Right ventricle myocardium inferior (tissue), 1 donor: ENCODE measurements at regions of chr1 and their contacts with region 1.

Region 1: DNA sequence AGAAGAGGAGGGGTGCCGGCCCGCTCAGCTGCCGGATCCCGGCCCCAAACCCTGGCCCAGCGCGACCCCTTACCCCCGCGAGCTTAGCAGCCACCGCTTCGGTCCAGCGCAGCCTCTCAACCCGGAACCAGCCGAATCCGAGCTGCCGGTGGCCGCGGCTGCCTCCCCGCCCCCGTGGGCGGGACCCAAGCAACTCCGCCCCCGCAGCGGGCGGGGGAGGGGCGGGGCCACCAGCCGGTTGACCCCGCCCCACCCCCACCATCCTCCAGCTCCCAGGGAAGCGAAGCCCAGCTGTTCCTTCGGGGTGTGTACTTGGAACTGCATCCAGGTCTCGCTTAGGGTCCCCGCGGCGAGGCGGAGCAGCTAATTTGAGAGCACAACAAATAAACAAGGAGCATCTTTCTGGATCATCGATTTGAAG is at the start of gene TRIM62:
- DNase-seq: peak; percentile 94
- ATAC-seq: peak; percentile 91
- total RNA-seq, gene TRIM62: 2.3 TPM

Region 2: DNA sequence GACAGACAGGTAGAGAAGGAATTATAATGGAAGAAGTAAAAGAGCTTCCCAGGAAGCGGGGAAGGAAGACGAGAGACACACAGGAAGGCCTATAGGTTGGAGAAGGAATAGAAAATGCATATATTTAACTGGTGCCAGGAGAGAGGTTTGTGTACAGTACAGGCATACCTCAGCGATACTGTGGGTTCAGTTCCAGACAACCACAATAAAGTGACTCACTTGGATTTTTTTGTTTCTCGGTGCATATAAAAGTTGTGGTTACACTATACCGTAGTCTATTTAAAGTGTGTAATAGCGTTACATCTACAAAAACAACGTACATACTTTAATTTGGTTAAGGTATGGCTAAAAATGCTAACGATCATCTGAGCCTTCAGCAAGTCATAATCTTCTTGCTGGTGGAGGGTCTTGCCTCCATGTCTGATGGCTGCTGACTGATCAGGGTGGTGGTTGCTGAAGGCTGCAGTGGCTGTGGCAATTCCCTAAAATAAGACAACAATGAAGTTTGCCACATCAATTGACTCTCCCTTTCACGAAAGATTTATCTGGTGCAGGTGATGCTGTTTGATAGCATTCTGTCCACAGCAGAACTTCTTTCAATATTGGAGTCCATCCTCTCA is 380.7 kb before region 1 on chr1:
- intact Hi-C with region 1: no loop called
- DNase-seq: no peak
- ATAC-seq: no peak

Region 3: DNA sequence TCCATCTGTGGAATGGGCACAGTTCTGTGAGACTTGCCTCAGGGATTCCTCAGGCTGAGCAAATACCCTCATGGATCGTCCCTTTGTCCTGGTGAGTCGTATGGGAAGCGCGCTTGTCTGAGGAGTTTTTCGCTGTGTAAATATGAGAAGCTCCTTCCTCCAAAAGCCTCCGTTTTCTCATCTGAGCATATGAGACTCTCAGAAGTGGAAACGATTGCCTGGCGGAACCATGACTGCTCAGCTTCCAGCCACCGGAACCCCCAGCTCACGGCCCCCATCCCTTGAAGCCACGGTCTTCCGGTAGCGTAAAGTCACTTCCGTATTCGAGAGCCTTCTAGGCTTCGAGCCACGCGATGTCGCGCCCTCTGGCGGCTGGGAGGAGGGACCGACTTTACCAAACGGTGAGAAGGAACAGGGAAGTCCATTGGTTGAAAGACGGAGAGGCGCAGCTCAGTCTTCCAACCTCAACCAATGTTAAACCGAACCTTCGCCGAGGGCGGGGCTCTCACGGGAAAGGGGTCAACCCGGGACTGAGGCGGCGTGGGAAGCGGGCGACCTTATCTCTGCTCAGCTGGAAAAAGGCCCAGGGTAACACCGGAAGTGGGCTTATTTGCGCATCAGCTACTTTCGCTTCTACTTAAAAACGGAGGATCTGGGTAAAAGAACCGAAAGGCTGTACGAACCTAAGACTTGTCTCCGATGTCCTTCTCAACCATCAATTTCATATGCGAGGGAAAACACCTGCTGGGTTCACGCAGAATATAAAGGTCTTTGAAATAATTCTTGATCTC is 54.7 kb before region 1 on chr1:
- intact Hi-C with region 1: loop called (anchors 2 kb)
- DNase-seq: peak; percentile 99
- ATAC-seq: peak; percentile 97